A549 (cell line): ENCODE measurements at regions of chr1 and their contacts with region 1.

Region 1: GRCh38 chr1:54944610-54945544 is 35.6 kb upstream of the TMEM61 start:
- DNase-seq: peak; percentile 63 to 80
- ATAC-seq: peak; percentile 93 to 94
- H3K4me3 ChIP-seq: no peak overlapping the region
- H3K27ac ChIP-seq: no peak overlapping the region
- H3K4me1 ChIP-seq: peaks cover 7% of the 10 kb centered on the region
- CTCF ChIP-seq: peak; percentile 74
- EP300 ChIP-seq: no peak
- POLR2A ChIP-seq: no peak
- RAD21 ChIP-seq: peak; percentile 74 to 77

Region 2: DNA sequence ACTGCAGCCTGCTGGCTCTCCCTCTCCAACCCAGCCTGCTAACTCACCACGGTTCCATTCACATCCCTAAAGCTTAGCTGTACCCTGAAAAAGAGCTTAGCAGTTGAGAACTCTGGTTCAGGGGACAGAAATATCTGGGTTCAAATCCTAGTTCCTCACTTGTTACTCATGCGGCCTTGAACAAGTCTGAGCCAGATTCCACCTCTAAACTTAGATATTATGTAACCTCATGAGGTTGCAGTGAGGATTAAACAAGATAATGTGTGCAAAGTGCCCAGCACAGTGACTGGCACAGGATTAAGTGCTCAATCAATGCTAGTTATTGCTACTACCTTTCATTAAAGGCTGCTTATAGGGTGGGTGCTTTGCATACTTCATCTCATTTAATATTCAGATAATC is 16.6 kb before region 1 on chr1:
- CTCF ChIA-PET with region 1: interaction called, 22 read pairs
- POLR2A ChIA-PET with region 1: no interaction called
- DNase-seq: no peak
- ATAC-seq: no peak
- H3K4me3 ChIP-seq: no peak overlapping the region
- H3K27ac ChIP-seq: no peak overlapping the region
- H3K4me1 ChIP-seq: no peaks in the 10 kb centered on the region
- CTCF ChIP-seq: no peak
- EP300 ChIP-seq: no peak
- POLR2A ChIP-seq: no peak
- RAD21 ChIP-seq: no peak

Region 3: GRCh38 chr1:54973205-54973921 is 28.5 kb after region 1 on chr1:
- CTCF ChIA-PET with region 1: interaction called, 21 read pairs
- POLR2A ChIA-PET with region 1: no interaction called
- DNase-seq: peak; percentile 24 to 44
- ATAC-seq: peak; percentile 83 to 89; a peak in 5 of 6 replicates
- H3K4me3 ChIP-seq: no peak overlapping the region
- H3K27ac ChIP-seq: no peak overlapping the region
- H3K4me1 ChIP-seq: peaks cover 22% of the 10 kb centered on the region
- CTCF ChIP-seq: peak; percentile 37
- EP300 ChIP-seq: no peak
- POLR2A ChIP-seq: no peak
- RAD21 ChIP-seq: peak; percentile 19 to 27; a peak in 1 of 5 replicates

Region 4: GRCh38 chr1:55015731-55016620 is 71.1 kb after region 1 on chr1:
- CTCF ChIA-PET with region 1: interaction called, 41 read pairs
- POLR2A ChIA-PET with region 1: no interaction called
- DNase-seq: no peak
- ATAC-seq: 0 out of 6 replicates have a peak, but pooled peaks of 1 of the 2 experiments have one; percentile 23
- H3K4me3 ChIP-seq: no peak overlapping the region
- H3K27ac ChIP-seq: no peak overlapping the region
- H3K4me1 ChIP-seq: no peaks in the 10 kb centered on the region
- CTCF ChIP-seq: no peak
- EP300 ChIP-seq: no peak
- POLR2A ChIP-seq: no peak
- RAD21 ChIP-seq: no peak